ENCODE measurements at regions of chr19 and their contacts with region 1.

Region 1: DNA sequence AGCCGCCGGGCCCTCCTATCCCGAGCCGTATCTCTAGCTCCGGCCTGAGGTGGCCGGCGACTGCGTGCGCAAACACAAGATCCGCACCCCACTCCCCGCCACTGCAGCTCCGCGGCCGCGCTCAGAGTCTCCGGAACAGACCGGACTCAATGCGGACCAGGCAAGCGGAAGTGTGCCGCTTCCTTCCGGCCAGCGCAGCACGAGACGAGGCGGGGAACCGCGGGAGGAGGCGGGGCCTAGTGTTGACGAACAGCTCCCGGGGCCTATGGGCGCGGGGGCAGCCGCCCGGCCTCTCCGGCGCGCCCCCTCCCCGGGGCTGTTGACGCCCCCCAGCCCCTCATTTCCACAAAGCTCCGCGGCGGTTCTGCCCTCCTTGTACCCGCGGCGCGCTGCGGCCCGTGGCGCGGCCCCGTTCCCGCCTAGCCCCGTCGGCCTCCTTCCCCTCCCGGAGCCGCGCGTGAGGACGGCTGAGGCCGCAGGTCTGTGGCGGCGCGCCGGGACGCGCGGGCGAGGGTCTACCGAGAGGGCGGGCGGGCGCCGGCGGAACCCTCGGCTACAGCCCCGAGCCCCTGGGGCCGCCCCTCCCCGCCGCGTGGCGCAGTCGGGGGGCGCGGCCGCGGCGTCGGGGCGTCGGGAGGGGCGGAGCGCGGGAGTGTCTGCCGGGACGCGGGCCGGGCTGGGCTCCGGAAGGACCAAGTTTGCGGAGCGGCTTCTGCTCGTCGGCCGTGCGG is at the start of gene DPY19L3:
- DNase-seq: peak; percentile 95
- H3K4me3 ChIP-seq: peak within 1 kb of the TSS; percentile 99
- H3K27ac ChIP-seq: peak within 1 kb of the TSS; percentile 98 to 99
- H3K4me1 ChIP-seq: peaks cover 5% of the 10 kb centered on the region
- H3K27me3 ChIP-seq: no peaks in the 10 kb centered on the region
- CTCF ChIP-seq: no peak
- POLR2A ChIP-seq: peak; percentile 85
- total RNA-seq, gene DPY19L3: 53.0 to 66.5 TPM

Region 2: DNA sequence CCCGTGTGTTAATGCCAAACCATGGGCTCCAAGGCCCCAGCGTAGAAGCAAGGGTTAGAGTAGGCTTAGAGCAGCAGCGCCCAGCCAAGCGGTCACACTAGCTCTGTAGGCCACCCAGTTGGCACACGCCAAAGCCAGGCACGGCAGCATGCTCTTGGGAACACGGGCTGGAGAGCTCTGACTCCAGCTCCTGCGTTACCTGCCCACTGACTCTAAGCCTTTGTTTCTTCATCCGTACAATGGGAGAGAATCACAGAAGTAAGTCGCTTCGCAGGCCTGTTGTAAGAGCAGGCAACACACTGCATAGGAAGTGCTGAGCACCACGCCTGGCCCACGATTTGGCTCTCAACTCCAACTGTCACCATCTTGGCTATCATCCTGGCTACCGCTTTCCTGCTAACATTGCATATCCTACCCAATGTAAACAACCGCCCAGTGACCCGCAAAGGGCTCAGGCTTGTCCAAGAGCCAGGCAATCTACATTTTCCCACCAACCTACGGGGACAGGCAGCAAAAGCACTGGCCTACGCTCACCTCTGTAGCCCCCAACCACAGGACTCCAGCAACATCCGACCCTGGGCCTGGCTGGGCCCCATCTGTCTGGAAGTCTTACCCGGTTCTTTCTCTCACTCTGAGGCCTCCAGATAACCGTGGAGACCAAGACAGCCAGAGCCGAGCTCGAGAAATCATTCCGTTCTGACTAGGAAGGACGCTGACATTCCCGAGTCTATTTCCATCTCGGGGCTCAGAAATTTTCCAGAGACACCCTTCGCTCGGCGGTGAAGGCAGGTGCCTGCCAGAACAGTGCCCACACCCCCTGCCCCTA is 151.7 kb before region 1 on chr19:
- intact Hi-C with region 1: no loop called
- DNase-seq: no peak
- H3K4me3 ChIP-seq: no peak overlapping the region
- H3K27ac ChIP-seq: no peak overlapping the region
- H3K4me1 ChIP-seq: no peaks in the 10 kb centered on the region
- H3K27me3 ChIP-seq: no peaks in the 10 kb centered on the region
- CTCF ChIP-seq: no peak
- POLR2A ChIP-seq: no peak

Region 3: GRCh38 chr19:32498648-32499200 is 93.1 kb after region 1 on chr19:
- intact Hi-C with region 1: no loop called
- DNase-seq: no peak
- H3K4me3 ChIP-seq: no peak overlapping the region
- H3K27ac ChIP-seq: no peak overlapping the region
- H3K4me1 ChIP-seq: no peaks in the 10 kb centered on the region
- H3K27me3 ChIP-seq: no peaks in the 10 kb centered on the region
- CTCF ChIP-seq: no peak
- POLR2A ChIP-seq: no peak

Region 4: DNA sequence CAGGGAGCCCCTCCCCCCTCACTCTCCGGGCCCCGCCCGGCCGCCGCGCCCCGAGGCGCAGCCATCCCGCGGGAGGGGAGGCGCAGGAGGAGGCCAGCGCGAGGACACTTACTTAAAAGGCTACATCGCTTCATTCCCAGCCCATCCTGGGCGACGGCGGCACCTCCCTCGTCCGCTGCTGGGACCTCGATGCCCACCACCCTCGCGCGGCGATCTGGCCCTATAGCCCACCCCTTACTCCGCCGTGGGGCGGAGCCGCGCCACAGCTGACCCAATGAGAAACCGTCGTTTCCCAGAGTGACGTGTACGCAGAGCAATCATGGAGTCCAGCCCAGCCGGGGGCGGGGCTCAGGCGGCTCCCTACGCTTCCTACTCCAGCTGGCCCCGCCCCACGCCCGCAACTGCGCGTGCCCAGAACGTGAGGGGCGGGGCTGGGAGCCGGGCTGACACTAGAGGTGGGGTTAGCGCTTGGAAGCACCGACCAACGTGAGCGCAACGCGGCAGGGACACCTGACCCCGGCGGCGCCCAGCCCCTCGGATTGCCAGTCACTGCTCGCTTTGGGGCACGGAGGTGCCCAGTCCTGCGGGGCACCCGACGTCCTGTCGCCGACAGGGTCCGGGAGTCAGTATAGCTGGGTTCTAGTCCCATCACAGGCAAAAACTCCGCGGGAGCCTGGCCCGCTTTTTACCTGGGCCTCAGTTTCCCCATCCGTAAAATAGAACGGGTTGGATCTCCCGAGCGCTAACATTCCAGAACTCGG is 269.5 kb after region 1 on chr19 and contains the start of gene ANKRD27:
- intact Hi-C with region 1: loop called (anchors 10 kb)
- DNase-seq: peak; percentile 98
- H3K4me3 ChIP-seq: peak within 1 kb of the TSS; percentile 89 to 94
- H3K27ac ChIP-seq: peak within 1 kb of the TSS; percentile 85 to 87
- H3K4me1 ChIP-seq: peaks cover 3% of the 10 kb centered on the region
- H3K27me3 ChIP-seq: no peaks in the 10 kb centered on the region
- CTCF ChIP-seq: no peak
- POLR2A ChIP-seq: peak; percentile 38
- total RNA-seq, gene ANKRD27: 25.7 to 51.4 TPM

Measured in prostate gland (tissue), 2 donors.